Right ventricle myocardium inferior (tissue), 1 donor: ENCODE measurements at regions of chr2 and their contacts with region 1.

Region 1: GRCh38 chr2:160429248-160430000 is 64.2 kb downstream of the RBMS1 start:
- DNase-seq: no peak
- ATAC-seq: no peak

Region 2: DNA sequence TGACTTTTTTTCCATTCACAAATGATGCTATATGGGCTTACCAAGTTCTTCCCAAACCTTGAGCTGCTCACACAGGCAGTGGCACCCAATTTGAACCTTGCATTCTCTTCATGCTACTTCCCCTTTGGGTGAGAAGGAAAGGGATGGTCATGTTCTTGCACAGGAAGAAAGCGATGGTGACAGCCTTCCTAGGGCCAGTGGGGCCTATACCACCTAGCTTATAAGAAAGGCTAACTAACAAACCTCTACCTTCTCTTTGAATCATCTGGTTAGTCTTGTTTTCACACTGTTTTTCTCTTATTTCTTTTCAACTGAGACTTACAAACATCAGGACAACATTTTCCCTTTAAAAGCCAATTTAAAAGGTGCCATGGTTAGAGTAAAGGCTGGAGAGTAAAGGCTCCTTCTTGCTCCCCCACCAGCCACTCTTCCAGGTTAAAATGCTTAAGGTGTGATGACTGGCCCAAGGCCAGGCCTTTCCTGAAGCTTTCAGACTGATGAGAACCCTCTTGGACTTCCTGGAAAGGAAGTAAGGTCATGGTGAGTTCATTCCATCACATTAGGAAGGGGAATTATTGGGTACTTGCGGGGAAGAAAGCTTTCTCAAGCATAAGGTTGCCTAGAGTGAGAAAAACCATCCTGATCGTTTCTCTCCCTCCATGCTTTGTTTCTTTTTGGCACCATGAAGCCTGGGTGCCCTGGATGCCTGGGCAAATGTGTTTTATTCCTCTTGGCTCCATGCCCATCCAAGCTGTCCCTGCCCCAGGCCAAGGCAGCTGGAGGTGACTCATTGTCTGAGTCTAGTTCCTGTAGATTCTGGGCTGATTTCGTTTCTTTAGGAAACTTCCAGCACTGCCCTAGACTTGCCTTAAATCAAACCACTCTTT is 187.9 kb before region 1 on chr2:
- intact Hi-C with region 1: no loop called
- DNase-seq: no peak
- ATAC-seq: no peak

Region 3: GRCh38 chr2:160332318-160332717 is 97.1 kb before region 1 on chr2:
- intact Hi-C with region 1: loop called (anchors 5 kb)
- DNase-seq: no peak
- ATAC-seq: peak; percentile 50

Region 4: GRCh38 chr2:160371251-160372009 is 58.0 kb before region 1 on chr2:
- intact Hi-C with region 1: loop called (anchors 5 kb)
- DNase-seq: peak; percentile 60
- ATAC-seq: peak; percentile 20

Region 5: DNA sequence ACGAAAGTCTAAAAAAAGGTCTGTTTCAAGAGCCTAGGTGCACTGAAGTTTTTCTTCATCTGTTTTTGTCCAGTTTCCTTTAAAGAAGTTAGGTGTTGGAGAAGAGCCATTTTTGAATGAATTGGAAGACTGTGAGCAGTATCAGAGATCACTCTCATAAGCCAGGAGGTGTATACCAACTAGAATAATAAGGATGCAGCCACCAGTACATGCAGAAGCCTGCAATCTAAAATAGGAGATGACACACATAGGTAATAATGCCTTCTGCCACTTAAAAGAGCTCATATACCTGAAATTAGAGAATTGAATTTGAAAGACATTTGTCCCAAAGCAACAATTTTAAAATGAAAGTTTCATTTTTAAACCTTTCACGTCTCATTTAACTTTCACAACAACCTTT is 17.5 kb before region 1 on chr2:
- intact Hi-C with region 1: loop called (anchors 2 kb)
- DNase-seq: no peak
- ATAC-seq: no peak

Region 6: DNA sequence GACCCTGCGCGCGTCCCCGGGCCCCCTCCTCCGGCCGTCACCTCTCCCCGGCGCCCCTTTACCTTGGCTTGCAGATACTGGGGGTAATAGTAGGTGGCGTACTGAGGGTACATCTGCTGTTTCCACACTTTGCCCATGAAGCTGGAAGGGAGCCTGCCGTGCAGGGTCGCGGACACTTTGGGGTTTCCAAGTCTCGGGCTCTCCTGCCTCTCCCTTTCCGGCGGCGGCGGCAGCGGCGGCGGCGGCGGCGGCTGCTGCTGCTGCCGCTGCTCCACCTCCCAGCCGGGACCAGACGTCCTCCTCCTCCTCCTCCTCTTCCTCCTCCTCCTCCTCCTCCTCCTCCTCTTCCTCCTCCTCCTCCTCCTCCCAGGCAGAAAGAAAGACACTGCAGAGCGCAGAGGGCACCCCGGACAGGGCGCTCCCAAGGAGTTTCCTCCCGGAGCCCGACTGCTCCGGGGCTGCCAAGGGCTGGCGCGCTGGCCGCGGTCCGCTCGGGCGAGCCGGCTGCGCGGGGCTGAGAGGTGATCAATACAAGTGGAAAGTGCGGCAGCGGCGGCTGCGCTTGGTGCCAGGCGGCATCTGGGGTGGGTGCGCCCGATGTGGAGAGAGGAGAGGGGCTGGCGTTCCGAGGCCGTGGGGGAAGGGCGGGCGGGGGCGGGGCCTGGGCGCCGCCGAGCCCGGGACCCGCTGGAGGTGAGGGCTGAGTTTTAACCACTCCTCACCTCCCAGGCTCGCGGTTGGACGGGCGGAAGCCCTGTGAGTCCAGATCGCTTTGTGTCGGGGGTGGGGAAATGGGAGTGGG is 64.0 kb after region 1 on chr2 and contains the start of gene RBMS1:
- intact Hi-C with region 1: loop called (anchors 5 kb)
- DNase-seq: peak; percentile 90
- ATAC-seq: peak; percentile 79
- total RNA-seq, gene RBMS1: 58.2 TPM

Region 7: GRCh38 chr2:160910681-160911080 is 481.3 kb after region 1 on chr2:
- intact Hi-C with region 1: loop called (anchors 10 kb)
- DNase-seq: no peak
- ATAC-seq: peak; percentile 81

Region 8: GRCh38 chr2:160970052-160970965 is 540.9 kb after region 1 on chr2:
- intact Hi-C with region 1: loop called (anchors 5 kb)
- DNase-seq: peak; percentile 34
- ATAC-seq: peak; percentile 60